ENCODE measurements at regions of chr5 and their contacts with region 1.

Region 1: GRCh38 chr5:160467555-160468362 is 46.1 kb downstream of the PTTG1 start:
- DNase-seq: peak; percentile 87
- H3K4me3 Mint-ChIP-seq: peak overlapping the region; percentile 99
- H3K27ac Mint-ChIP-seq: peak overlapping the region; percentile 98
- H3K4me1 Mint-ChIP-seq: peaks cover 72% of the 10 kb centered on the region
- H3K27me3 Mint-ChIP-seq: no peaks in the 10 kb centered on the region

Region 2: DNA sequence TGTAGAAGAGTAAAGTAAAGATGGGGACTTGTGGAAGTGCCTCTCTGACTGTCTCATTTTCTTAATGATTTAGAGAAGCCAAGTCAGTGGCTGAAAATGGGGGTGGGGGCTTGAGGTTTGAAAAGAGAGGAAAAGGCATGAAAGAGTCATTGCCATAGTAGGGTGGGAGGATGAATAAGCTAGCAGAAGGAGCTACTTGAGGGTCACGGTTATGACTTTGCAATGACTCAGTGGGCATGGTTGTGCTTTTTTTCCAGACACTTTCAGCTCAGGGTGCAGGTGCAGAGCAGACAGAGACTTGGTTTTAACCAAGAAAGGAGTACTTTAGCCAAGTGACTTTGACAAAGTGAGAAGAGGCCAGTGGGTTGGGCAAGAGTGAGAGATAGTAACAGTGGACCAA is 71.7 kb after region 1 on chr5:
- CTCF ChIA-PET with region 1: no interaction called
- intact Hi-C with region 1: loop called (anchors 1 kb)
- DNase-seq: peak; percentile 77
- H3K4me3 Mint-ChIP-seq: no peak overlapping the region
- H3K27ac Mint-ChIP-seq: no peak overlapping the region
- H3K4me1 Mint-ChIP-seq: peaks cover 7% of the 10 kb centered on the region
- H3K27me3 Mint-ChIP-seq: peaks cover 4% of the 10 kb centered on the region

Region 3: DNA sequence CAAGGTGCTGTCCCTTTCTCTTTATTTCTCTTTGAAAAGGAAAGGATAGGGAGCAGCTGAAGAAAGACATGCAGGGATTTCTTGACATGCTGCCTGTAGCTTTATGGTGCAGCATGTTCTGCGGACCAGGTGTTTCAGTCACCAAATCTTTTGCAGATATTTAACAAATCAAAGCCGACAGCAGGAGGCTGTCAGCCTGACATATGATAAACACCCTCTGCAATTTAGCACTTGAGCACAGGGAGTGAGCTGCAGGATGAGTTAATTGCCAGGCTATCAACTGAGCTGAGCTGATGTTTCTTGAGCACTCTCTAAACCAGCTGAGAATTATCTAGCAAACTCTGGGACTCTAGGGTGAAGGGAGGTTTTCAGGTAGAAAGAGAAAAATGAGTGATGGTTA is 597.0 kb after region 1 on chr5:
- CTCF ChIA-PET with region 1: no interaction called
- intact Hi-C with region 1: no loop called
- DNase-seq: no peak
- H3K4me3 Mint-ChIP-seq: no peak overlapping the region
- H3K27ac Mint-ChIP-seq: no peak overlapping the region
- H3K4me1 Mint-ChIP-seq: no peaks in the 10 kb centered on the region
- H3K27me3 Mint-ChIP-seq: no peaks in the 10 kb centered on the region

Measured in activated naive CD4-positive, alpha-beta T cell treated with anti-CD3 and anti-CD28 coated beads for 36 hours (primary cell).